ENCODE measurements at regions of chr19 and their contacts with region 1.

Region 1: GRCh38 chr19:19234220-19234816 is 22.6 kb downstream of the NCAN start:
- DNase-seq: no peak
- ATAC-seq: no peak
- H3K4me3 ChIP-seq: no peak overlapping the region
- H3K27ac ChIP-seq: no peak overlapping the region
- H3K4me1 ChIP-seq: no peaks in the 10 kb centered on the region
- H3K27me3 ChIP-seq: no peaks in the 10 kb centered on the region
- CTCF ChIP-seq: no peak

Region 2: DNA sequence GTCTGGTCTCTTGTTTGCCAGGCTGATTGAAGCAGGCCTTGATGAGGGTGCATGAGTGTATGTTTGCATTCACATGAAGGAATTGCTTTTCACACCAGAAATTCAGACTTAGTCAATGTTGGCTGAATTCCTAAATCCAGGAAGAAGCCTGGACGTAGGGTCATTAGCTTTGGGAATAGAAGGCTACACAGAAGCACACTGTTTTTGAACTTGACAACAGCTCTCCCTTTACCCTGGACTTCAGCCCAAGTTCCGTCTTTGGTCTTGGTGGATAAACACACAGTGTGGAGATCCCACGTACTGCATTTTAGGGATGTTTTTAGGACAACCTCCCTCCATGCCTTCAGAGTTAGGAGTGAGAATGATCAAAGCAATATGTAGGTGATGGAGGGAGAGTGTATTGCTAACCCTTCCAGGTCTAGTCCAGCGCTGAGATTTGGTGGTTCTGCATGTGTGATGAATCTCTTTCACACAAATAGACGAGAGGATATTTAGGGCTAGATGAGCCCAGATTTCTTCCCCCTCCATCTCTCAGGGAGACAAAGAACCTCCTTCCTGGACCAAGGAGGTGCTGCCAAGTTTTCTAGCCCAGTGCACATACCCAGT is 16.0 kb after region 1 on chr19:
- CTCF ChIA-PET with region 1: no interaction called
- POLR2A ChIA-PET with region 1: interaction called, 11 read pairs
- in situ Hi-C with region 1: no loop called
- intact Hi-C with region 1: no loop called
- DNase-seq: no peak
- ATAC-seq: no peak; the same call in 1 of the 2 replicates
- H3K4me3 ChIP-seq: no peak overlapping the region
- H3K27ac ChIP-seq: no peak overlapping the region
- H3K4me1 ChIP-seq: no peaks in the 10 kb centered on the region
- H3K27me3 ChIP-seq: peaks cover 6% of the 10 kb centered on the region; the same call in 1 of the 2 replicates
- CTCF ChIP-seq: no peak

Measured in Panc1 (cell line).